ENCODE measurements at regions of chr1 and their contacts with region 1.

Region 1: GRCh38 chr1:178310685-178311105 is 186.1 kb downstream of the CLEC20A start:
- DNase-seq: peak in 1 of 42 donors; percentile 21

Region 2: DNA sequence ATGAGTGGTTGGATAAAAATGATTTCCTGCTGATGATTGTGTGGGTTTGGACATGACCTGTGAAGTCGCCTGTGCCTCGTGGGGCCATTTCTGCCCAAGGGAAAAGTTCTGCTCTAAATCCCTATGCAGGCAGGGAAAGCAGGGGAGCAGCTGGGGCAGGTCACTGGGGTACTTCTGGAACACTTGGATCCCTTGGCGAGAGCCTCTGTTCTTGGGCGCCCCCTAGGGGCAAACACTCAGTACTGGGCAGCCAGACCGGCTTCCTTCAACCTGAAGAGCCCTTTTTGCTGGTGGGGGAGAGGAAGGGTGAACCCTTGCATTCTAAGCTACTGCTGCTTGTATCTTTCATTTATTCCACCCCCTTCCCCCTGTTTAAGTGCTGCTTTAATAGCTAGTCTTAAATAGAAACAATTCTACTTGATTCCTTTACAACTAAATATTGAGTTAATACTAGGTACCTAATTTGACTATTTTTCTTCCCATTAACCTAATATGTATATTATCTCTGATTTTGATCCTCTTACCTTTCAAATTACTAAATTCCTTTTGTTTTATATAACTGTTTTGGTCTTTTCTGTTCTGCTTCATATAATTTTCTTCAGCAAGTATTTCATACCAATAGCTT is 191.1 kb after region 1 on chr1:
- intact Hi-C with region 1: loop called (anchors 2 kb)
- DNase-seq: peak; percentile 53 to 91 (median 78)

Measured in head of caudate nucleus (tissue), 42 donors.